Heart left ventricle (tissue), 16 donors: ENCODE measurements at regions of chr4 and their contacts with region 1.

Region 1: DNA sequence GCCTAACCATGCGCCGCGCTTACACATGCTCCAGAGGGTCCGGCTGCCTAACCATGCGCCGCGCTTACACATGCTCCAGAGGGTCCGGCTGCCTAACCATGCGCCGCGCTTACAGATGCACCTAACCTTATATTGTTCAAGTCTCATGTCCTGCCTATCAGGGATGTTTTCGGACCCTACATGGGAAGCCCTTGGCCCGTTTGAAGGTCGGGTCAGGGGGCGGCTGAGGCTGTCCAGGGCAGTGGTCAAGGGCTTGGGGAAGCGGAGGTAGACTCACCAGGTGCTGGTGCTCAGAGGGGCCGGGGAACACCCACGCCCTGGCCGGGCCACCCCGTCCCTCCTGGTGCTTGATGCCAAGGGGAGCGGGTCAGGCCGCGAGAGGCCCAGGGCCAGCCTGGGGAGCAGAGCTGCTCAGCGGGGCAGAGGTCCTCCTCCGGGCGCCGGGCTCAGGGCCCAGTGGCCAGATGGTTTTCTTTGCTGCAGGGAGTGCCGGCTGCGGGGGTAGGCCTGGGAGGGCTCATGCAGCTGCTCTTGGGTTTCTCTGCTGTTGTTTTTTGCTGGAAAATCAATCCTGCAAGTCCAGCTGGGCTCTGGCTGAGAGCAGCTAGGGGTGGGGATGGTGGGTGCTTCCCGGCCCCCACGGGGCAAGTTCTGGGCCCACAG is 35.4 kb upstream of the SPON2 start:
- DNase-seq: peak; percentile 57 to 83 (median 75)
- ATAC-seq: peak in 3 of 4 donors; percentile 31 to 44 (median 44)
- H3K4me3 ChIP-seq: peak overlapping the region in 3 of 12 donors; percentile 2 to 24 (median 6)
- H3K27ac ChIP-seq: peak overlapping the region; percentile 35 to 87 (median 70)
- H3K4me1 ChIP-seq: peaks cover 5 to 55% (median 43%) of the 10 kb centered on the region in 12 donors
- H3K27me3 ChIP-seq: no peaks in the 10 kb centered on the region
- CTCF ChIP-seq: no peak
- POLR2A ChIP-seq: no peak

Region 2: DNA sequence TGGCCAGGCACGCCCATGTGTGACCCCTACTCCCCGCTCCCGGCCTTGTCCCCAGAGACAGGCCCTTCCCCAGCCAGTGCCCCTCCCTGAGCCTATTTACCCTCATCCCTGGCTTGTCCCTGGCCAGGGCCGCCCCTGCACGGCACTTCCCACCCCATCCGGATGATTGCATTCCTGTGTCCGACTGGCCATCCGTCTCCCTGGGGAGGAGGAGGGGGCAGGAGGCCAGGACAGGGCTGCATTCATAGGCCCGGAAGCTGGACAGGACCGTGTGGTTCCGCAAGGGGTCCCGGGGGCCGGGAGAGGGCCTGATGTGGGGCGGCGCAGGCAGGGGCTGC is 18.4 kb after region 1 on chr4:
- intact Hi-C with region 1: loop called in 1 of 10 experiments (anchors 2 kb)
- DNase-seq: peak; percentile 69 to 90 (median 86)
- ATAC-seq: peak; percentile 48 to 84 (median 69)
- H3K4me3 ChIP-seq: peak overlapping the region in 1 of 12 donors; percentile 9
- H3K27ac ChIP-seq: peak overlapping the region in 10 of 12 donors; percentile 23 to 75 (median 62)
- H3K4me1 ChIP-seq: peaks cover 0 to 21% (median 15%) of the 10 kb centered on the region in 12 donors
- H3K27me3 ChIP-seq: no peaks in the 10 kb centered on the region
- CTCF ChIP-seq: no peak
- POLR2A ChIP-seq: no peak

Region 3: DNA sequence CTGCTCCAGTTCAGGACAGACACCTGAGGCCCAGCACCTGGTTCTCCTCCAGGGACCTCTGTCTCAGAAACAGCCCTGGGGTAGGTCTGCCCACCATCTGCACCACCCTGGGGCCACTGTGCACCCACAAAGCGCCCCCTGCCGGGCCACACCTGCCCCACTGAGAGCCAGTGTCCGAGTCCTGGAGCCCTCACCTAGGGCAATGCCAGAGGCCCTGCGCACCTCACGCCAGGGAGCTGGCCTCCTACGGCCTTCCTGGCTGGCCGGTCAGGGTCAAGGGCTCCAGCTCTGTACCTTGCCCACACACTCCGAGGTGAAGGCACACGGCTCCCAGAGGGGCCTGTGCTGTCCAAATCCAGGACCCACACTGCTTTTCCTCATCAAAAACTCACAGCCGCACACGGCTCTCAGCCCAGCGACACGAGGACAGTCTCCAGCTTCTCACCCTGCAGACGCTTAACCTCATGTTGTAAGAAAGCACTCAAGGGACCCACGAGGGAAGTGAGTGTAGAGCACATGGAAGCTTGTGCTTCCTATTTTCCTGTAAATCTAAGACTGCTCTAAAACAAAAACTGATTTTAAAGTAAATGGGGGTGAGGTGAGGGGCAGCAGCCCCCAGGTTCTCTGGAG is 35.8 kb after region 1 on chr4:
- intact Hi-C with region 1: loop called in 3 of 10 experiments (anchors 5 kb)
- DNase-seq: peak in 1 of 5 donors; percentile 61
- ATAC-seq: no peak
- H3K4me3 ChIP-seq: no peak overlapping the region
- H3K27ac ChIP-seq: peak overlapping the region in 1 of 12 donors; percentile 96
- H3K4me1 ChIP-seq: peaks cover 4 to 72% (median 60%) of the 10 kb centered on the region in 12 donors
- H3K27me3 ChIP-seq: no peaks in the 10 kb centered on the region
- CTCF ChIP-seq: no peak
- POLR2A ChIP-seq: no peak

Region 4: GRCh38 chr4:1249148-1249730 is 41.5 kb after region 1 on chr4:
- intact Hi-C with region 1: loop called in 3 of 10 experiments (anchors 5 kb)
- DNase-seq: peak; percentile 89 to 93 (median 91)
- ATAC-seq: peak; percentile 25 to 69 (median 68)
- H3K4me3 ChIP-seq: peak overlapping the region; percentile 39 to 94 (median 78)
- H3K27ac ChIP-seq: peak overlapping the region; percentile 91 to 100 (median 98)
- H3K4me1 ChIP-seq: peaks cover 7 to 54% (median 49%) of the 10 kb centered on the region in 12 donors
- H3K27me3 ChIP-seq: no peaks in the 10 kb centered on the region
- CTCF ChIP-seq: peak in 1 of 12 donors; percentile 13
- POLR2A ChIP-seq: peak in 1 of 2 donors; percentile 63

Region 5: GRCh38 chr4:1606321-1606989 is 398.7 kb after region 1 on chr4:
- intact Hi-C with region 1: no loop called
- DNase-seq: peak in 3 of 5 donors; percentile 9 to 23 (median 19)
- ATAC-seq: no peak
- H3K4me3 ChIP-seq: no peak overlapping the region
- H3K27ac ChIP-seq: no peak overlapping the region
- H3K4me1 ChIP-seq: peaks cover 0 to 6% (median 0%) of the 10 kb centered on the region in 12 donors
- H3K27me3 ChIP-seq: peaks cover 0 to 29% (median 7%) of the 10 kb centered on the region in 9 donors
- CTCF ChIP-seq: no peak
- POLR2A ChIP-seq: no peak